ENCODE measurements at regions of chr2 and their contacts with region 1.

Region 1: GRCh38 chr2:97095661-97096060 is 979 bp upstream of the FAHD2B start:
- ATAC-seq: no peak
- H3K4me3 ChIP-seq: peak overlapping the region; percentile 23 to 48 (median 39)
- H3K27ac ChIP-seq: no peak overlapping the region
- H3K4me1 ChIP-seq: peaks cover 5 to 9% of the 10 kb centered on the region in 2 donors

Region 2: DNA sequence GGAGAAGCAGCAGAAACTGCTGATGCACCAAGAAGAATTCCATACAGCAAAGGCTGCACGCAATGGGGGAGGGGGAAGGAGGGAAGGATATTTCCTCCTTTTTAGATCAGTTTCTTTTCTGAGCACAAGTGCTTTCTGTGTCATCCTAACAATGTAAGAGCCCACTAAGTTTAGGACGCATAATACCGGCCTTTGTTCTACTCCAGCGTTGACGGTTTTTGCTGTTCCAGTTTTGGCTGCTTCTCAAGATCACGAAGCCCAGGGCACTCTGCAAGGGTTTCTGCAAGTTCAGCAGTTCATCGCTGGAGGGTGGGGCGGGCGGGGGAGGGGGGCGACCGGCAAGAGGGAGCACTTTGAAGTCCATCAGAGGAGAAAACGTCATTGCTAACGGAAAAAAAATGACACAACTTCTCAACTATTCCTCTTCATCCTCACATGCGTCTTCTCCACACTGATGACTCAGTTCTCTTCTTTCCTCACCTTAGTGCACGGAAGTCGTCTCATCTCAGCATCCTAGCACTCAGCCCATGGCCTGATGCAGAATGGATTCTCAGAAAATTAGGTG is 117.9 kb before region 1 on chr2:
- in situ Hi-C with region 1: loop called in 1 of 9 experiments (anchors 25 kb)
- ATAC-seq: peak; percentile 69 to 94 (median 82)
- H3K4me3 ChIP-seq: no peak overlapping the region
- H3K27ac ChIP-seq: peak overlapping the region; percentile 26 to 35
- H3K4me1 ChIP-seq: peaks cover 9 to 14% of the 10 kb centered on the region in 2 donors

Region 3: GRCh38 chr2:97355887-97356286 is 260.2 kb after region 1 on chr2:
- in situ Hi-C with region 1: no loop called
- ATAC-seq: peak in 1 of 8 experiments; percentile 82
- H3K4me3 ChIP-seq: no peak overlapping the region
- H3K27ac ChIP-seq: no peak overlapping the region
- H3K4me1 ChIP-seq: peaks cover 0 to 2% of the 10 kb centered on the region in 2 donors